ENCODE measurements at regions of chr2 and their contacts with region 1.

Region 1: DNA sequence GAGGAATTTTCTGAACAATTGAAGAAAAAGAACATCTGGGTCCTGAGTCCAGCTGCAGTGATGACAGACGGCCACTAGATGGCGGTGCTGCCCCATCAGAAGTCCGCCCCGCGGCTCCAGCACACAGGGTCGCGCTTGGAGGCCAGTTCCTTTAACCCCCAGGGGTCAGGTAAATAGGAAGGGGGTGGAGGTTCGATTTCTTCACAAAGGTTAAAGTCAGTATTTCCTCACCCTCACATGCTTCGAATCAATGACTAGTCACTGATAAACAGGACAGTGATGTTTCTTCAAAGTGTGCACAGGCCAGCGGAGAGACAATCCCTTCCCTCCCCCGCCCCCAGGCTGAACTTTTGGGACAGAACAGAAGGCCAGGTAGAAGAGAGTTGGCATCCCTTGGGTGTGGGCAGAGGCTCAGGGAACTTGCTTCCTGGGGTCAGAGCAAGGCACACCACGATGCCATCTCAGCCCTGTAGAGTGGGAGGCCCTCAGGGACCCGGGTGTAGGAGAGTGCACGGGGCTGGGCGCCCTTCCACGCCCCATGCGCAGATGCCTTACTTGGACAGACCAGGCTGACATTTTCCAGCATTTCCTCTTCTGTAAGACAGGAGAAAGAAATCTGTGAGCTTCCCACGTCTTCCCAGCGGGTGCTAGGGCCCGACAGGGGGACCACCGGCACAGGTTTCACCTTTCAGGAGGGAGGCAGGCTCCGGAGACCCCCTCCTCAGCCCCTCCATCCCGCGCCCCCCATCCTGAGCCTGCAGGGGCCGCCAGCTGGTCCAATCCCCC is 722 bp downstream of the APOB start:
- DNase-seq: peak; percentile 35 to 91 (median 74)

Region 2: DNA sequence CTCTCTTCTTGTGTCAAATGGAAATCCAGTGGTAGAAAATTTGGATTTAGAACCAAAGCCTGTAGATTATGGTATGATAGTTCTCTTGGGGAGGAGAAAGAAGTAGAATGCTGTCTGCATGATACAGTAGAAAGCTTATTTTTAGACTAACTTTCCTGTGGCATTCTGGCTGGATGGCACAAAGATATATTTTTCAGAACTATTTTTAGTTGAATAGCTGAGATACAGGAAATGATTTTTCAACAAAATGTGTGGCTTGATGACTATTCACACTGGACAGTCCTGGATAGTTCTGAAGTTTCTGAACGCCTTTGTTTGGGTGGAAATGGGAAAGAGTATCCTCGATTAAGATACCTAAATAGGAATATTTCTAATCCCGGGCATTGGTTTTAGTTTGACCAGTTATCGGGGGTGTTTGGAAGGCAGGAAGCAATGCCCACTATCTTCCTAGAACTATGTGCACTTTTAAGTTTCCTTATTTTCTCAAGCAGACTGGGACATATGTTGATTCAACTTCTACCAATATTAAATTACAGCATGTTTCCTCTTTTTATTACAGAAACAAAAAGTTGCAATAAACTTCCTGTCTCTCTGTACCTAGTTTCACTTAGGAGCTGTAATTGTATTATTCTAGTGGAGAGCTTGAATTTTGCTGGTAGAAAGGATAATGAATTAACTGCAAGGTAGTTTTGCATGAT is 344.1 kb before region 1 on chr2:
- intact Hi-C with region 1: no loop called
- DNase-seq: no peak

Region 3: GRCh38 chr2:21118302-21118920 is 75.3 kb after region 1 on chr2:
- intact Hi-C with region 1: loop called (anchors 5 kb)
- DNase-seq: peak in 40 of 42 donors; percentile 6 to 77 (median 42)